ENCODE measurements at regions of chr21 and their contacts with region 1.

Region 1: GRCh38 chr21:34642211-34643075 is 26.4 kb upstream of the CLIC6 start:
- DNase-seq: peak; percentile 87
- ATAC-seq: peak; percentile 77
- H3K4me3 ChIP-seq: 0 out of 2 replicates have a peak overlapping the region, but pooled peaks have one; percentile 6
- H3K27ac ChIP-seq: peak overlapping the region; percentile 97
- H3K4me1 ChIP-seq: peaks cover 60% of the 10 kb centered on the region
- H3K27me3 ChIP-seq: no peaks in the 10 kb centered on the region
- CTCF ChIP-seq: no peak
- EP300 ChIP-seq: peak in 1 of 2 experiments; percentile 65; a peak in 2 of 4 replicates
- POLR2A ChIP-seq: no peak; the same call in 1 of the 2 replicates
- RAD21 ChIP-seq: no peak

Region 2: GRCh38 chr21:34669149-34669879 is 26.9 kb after region 1 on chr21:
- CTCF ChIA-PET with region 1: interaction called, 16 read pairs
- POLR2A ChIA-PET with region 1: interaction called, 14 read pairs
- RAD21 ChIA-PET with region 1: interaction called, 9 read pairs
- SMC1A ChIA-PET with region 1: interaction called, 24 read pairs
- in situ Hi-C with region 1: no loop called
- intact Hi-C with region 1: loop called (anchors 1 kb)
- DNase-seq: no peak
- ATAC-seq: peak; percentile 80
- H3K4me3 ChIP-seq: peak overlapping the region; percentile 91
- H3K27ac ChIP-seq: peak overlapping the region; percentile 58
- H3K4me1 ChIP-seq: peaks cover 18% of the 10 kb centered on the region
- H3K27me3 ChIP-seq: no peaks in the 10 kb centered on the region; a peak in 1 of 4 replicates
- CTCF ChIP-seq: no peak
- EP300 ChIP-seq: no peak
- POLR2A ChIP-seq: peak; percentile 71
- RAD21 ChIP-seq: no peak

Region 3: DNA sequence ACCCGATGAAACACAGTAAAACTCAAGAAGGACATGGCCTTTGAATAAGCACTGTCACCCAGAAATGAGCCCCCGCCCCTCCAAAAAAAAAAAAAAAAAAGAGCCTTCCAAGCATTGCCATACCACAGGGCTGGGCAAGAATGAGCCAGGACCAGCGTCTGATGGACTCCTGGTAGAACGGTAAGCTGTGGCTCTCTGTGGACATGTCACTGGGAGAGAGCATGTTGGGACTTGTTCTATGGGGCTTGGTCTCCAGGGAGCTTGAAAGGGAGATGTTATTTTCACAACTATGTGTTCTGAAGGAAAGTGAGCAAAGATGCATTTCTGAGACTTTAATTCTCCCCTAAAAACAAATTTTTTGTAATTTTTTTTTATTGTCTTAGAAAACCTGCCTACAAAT is 32.7 kb after region 1 on chr21:
- CTCF ChIA-PET with region 1: interaction called, 16 read pairs
- POLR2A ChIA-PET with region 1: interaction called, 14 read pairs
- RAD21 ChIA-PET with region 1: interaction called, 9 read pairs
- SMC1A ChIA-PET with region 1: interaction called, 6 read pairs
- in situ Hi-C with region 1: no loop called
- intact Hi-C with region 1: loop called (anchors 1 kb)
- DNase-seq: no peak
- ATAC-seq: peak; percentile 10; the same call in 2 of the 3 replicates
- H3K4me3 ChIP-seq: no peak overlapping the region
- H3K27ac ChIP-seq: peak overlapping the region; percentile 81
- H3K4me1 ChIP-seq: peaks cover 29% of the 10 kb centered on the region
- H3K27me3 ChIP-seq: no peaks in the 10 kb centered on the region
- CTCF ChIP-seq: no peak
- EP300 ChIP-seq: no peak
- POLR2A ChIP-seq: no peak
- RAD21 ChIP-seq: no peak

Region 4: GRCh38 chr21:34704119-34704518 is 61.7 kb after region 1 on chr21:
- CTCF ChIA-PET with region 1: no interaction called
- POLR2A ChIA-PET with region 1: no interaction called
- RAD21 ChIA-PET with region 1: no interaction called
- SMC1A ChIA-PET with region 1: no interaction called
- in situ Hi-C with region 1: no loop called
- intact Hi-C with region 1: no loop called
- DNase-seq: no peak
- ATAC-seq: no peak
- H3K4me3 ChIP-seq: no peak overlapping the region
- H3K27ac ChIP-seq: no peak overlapping the region
- H3K4me1 ChIP-seq: peaks cover 25% of the 10 kb centered on the region
- H3K27me3 ChIP-seq: no peaks in the 10 kb centered on the region
- CTCF ChIP-seq: no peak
- EP300 ChIP-seq: no peak
- POLR2A ChIP-seq: no peak
- RAD21 ChIP-seq: no peak